MCF 10A (cell line): ENCODE measurements at regions of chr7 and their contacts with region 1.

Region 1: GRCh38 chr7:28298870-28299518 is 113.3 kb upstream of the CREB5 start:
- DNase-seq: peak; percentile 78
- H3K4me3 Mint-ChIP-seq: no peak overlapping the region
- H3K27ac Mint-ChIP-seq: no peak overlapping the region
- H3K4me1 Mint-ChIP-seq: peaks cover 9% of the 10 kb centered on the region
- H3K27me3 Mint-ChIP-seq: no peaks in the 10 kb centered on the region
- CTCF ChIP-seq: peak; percentile 48

Region 2: DNA sequence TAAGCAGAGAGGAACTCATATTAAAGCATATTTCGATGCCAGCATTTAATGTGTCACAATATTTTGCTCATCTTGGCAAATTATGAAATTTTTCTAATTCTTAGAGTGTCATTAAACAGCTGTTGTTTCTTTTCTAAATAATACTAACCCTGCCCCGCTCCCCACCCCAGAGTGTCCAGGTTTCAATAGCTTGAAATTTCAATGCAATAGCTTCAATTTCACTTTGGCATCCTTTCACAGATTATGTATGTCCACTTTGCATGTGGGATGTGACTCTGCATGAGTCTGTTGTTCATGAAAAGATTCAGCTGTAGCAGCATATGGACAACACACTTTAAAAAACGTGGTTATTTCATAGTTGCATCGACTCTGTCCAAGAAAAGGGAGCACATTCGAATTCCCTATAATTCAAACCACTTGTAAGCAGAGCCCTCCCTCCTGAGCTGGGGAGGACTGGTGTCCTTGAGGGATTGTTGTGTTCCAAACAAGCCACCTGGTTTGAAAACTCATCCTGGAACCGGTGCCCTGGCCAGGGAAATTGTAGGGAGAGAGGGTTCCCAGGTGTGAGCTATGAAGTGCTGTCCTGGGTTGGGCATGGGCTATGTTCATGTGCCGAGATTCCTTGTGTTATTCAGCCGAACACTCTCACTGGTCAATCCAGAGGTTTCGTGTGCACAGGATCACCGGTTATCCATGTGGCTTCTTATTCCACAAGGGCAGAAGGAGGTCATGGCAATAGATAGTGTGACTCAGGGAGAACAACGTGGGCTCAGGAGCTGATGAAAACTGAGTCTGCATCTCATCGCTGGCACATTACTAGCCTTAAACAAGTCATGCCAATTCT is 48.7 kb after region 1 on chr7:
- CTCF ChIA-PET with region 1: interaction called, 10 read pairs
- POLR2A ChIA-PET with region 1: interaction called, 24 read pairs
- intact Hi-C with region 1: no loop called
- DNase-seq: peak; percentile 56
- H3K4me3 Mint-ChIP-seq: no peak overlapping the region
- H3K27ac Mint-ChIP-seq: peak overlapping the region; percentile 66
- H3K4me1 Mint-ChIP-seq: peaks cover 30% of the 10 kb centered on the region
- H3K27me3 Mint-ChIP-seq: no peaks in the 10 kb centered on the region
- CTCF ChIP-seq: no peak

Region 3: DNA sequence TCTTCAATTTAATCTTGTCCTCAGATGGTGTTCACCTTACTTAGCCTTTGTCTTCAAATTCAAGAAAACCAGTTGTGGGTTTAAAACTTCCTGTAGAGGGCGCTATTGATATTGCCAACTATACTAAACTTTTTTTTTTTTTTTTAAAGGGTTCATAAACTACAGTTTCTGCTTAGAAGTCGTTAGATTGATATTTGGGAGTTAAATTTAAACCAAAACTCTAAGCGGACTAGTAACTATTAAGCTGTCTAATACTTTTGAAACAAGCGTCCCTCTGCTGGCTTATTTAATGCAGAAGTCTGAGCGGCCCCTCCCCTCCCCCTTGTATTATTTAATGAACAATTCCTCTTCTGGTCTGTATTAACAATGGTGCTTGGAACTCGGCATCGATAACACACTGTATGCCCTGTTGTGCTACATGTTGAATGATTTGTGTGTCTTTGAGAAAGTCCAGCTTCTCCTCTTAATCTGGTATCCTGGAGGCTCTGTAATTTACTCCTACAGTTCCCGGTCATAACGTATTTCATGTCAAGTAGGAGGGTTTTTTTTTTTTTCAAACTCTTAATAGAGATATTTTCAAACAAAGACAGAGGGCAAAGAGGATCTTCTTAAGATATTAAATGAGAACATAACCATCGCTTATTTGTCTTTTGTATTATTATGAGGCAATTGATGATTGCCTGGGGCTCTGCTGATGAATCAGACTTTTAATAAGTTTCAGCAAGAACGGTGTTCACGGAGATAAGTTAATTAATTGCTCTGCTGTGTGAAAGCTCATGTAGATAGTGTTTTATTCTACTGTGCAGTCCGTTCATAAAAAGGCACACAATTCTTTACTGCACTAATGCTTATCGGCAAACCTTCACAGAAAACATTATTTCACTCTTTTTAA is 90.8 kb after region 1 on chr7:
- CTCF ChIA-PET with region 1: interaction called, 12 read pairs
- POLR2A ChIA-PET with region 1: no interaction called
- intact Hi-C with region 1: loop called (anchors 1 kb)
- DNase-seq: peak; percentile 61
- H3K4me3 Mint-ChIP-seq: peak overlapping the region; percentile 65
- H3K27ac Mint-ChIP-seq: peak overlapping the region; percentile 76
- H3K4me1 Mint-ChIP-seq: peaks cover 12% of the 10 kb centered on the region
- H3K27me3 Mint-ChIP-seq: no peaks in the 10 kb centered on the region
- CTCF ChIP-seq: peak; percentile 61

Region 4: DNA sequence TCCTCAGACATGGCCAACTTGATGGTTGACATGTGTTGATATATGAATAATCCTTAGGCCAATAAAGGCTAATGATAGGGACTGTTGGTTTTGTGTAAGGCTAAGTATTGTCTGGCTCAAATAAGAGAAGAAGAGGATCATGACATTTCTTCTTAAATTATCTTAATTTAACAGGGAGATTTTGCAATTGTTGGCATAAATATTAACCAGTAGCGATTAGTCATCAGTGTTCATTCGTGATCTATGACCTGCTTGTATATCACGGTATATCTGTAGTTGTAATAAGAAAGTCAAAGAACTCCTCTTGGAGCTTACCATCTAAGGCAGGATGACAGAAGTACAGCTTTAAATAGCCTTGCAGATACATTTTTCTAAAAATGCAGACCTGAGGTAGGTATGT is 309.7 kb after region 1 on chr7:
- CTCF ChIA-PET with region 1: interaction called, 14 read pairs
- POLR2A ChIA-PET with region 1: interaction called, 5 read pairs
- intact Hi-C with region 1: no loop called
- DNase-seq: peak; percentile 38
- H3K4me3 Mint-ChIP-seq: no peak overlapping the region
- H3K27ac Mint-ChIP-seq: no peak overlapping the region
- H3K4me1 Mint-ChIP-seq: peaks cover 18% of the 10 kb centered on the region
- H3K27me3 Mint-ChIP-seq: no peaks in the 10 kb centered on the region
- CTCF ChIP-seq: no peak

Region 5: DNA sequence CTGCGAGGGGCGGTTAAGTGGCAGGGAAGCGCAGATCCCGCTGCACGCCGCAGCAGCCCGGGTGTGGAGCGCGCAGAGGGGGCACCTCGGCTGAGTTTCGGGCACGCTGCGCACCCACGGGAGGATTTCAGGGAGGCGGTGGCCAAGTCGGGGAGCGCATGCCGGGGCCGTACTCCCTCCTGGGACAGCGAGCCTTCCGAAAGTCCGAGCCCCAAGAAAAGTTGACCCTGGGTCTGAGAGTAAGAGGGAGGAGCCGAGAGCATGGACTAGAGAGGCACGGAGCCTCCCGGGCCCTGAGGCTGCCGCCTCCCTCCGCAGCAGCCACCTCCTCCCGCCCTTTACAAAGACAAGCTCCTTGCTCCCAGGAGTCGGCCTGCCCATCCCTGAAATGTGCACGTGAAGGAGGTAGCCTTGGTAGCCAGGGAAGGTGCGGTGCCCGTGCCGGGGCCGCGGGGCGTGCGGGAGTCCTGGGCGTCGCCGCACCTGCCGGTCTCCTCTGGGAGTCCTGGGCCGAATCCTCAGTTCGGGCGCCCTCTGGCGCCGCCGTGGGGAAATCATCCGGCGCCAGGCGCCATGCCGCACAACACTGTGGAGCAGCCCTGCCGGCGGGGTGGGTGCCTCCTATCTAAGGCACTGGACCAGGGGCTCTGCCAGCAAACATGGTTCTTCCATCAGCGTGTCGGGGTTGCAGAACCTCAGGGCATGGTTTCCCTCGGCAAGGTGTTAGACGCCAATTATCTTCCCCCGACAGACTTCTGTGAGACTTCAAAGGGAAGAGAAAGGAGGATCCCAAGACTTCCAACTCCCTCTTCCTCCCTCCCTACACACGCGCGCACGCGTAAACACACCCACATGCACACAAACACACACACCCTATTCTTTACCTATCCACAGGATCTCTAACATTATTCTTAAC is 555.1 kb after region 1 on chr7:
- CTCF ChIA-PET with region 1: interaction called, 13 read pairs
- POLR2A ChIA-PET with region 1: interaction called, 4 read pairs
- intact Hi-C with region 1: loop called (anchors 2 kb)
- DNase-seq: peak; percentile 74
- H3K4me3 Mint-ChIP-seq: peak overlapping the region; percentile 66
- H3K27ac Mint-ChIP-seq: no peak overlapping the region
- H3K4me1 Mint-ChIP-seq: peaks cover 19% of the 10 kb centered on the region
- H3K27me3 Mint-ChIP-seq: no peaks in the 10 kb centered on the region
- CTCF ChIP-seq: peak; percentile 92